ENCODE measurements at regions of chr6 and their contacts with region 1.

Region 1: GRCh38 chr6:37169496-37170272 is at the start of gene PIM1:
- DNase-seq: peak; percentile 99
- ATAC-seq: peak; percentile 90
- H3K4me3 Mint-ChIP-seq: peak within 1 kb of the TSS; percentile 92
- H3K27ac Mint-ChIP-seq: peak within 1 kb of the TSS; percentile 99
- H3K4me1 Mint-ChIP-seq: peaks cover 51% of the 10 kb centered on the region
- H3K27me3 Mint-ChIP-seq: no peaks in the 10 kb centered on the region
- CTCF ChIP-seq: no peak
- total RNA-seq, gene PIM1: 64.7 to 81.2 TPM (median 78.1 TPM) in 3 replicates

Region 2: DNA sequence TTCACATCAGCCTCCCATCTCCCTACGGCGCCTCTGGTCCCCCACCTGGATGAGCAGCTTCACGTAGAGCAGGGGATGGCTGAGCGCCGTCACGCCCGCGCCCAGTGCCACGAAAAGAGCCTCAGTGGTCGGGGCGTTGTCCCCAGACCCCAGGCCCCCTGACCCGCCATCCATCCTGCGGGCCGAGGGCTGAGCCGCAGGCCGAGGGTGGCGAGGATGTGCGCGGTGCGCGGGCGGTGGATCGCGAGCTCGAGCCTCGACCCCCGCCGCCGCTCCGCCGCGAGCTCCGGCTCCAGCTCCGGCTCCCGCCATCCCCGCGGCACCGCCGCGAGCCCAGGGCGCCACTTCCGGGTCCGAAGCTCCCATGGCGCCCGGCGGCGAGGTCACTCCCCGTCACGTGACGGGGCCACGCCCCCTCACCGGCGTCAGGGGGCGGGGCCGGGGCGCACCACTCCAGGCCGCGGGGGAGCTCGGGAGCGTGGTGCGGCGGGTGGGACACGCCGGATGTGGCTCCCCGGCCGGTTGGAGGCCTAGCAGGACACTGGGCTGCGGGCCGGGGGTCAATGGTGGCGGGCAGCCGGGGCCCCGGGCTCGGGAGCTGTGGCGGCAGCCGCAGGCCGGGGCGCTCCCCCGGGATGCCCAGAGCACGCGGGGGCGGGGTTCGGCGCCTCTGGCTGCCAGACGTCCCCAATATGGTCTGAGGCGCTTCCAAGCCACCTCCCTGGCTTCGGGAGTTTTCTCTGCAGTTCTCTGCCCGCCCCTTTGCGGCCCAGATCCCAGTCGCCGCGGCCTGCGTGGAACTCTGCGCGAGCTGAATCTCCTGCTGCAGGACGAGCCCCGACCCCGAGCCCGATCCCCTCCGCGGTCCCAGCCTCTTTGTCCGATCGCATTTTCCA is 183.6 kb before region 1 on chr6 and contains the start of gene MTCH1:
- CTCF ChIA-PET with region 1: no interaction called
- POLR2A ChIA-PET with region 1: interaction called, 10 read pairs
- DNase-seq: peak; percentile 80
- ATAC-seq: peak; percentile 78
- H3K4me3 Mint-ChIP-seq: peak within 1 kb of the TSS; percentile 98
- H3K27ac Mint-ChIP-seq: peak within 1 kb of the TSS; percentile 95
- H3K4me1 Mint-ChIP-seq: peaks cover 20% of the 10 kb centered on the region
- H3K27me3 Mint-ChIP-seq: no peaks in the 10 kb centered on the region
- CTCF ChIP-seq: no peak
- total RNA-seq, gene MTCH1: 198 to 207 TPM (median 204 TPM) in 3 replicates

Region 3: DNA sequence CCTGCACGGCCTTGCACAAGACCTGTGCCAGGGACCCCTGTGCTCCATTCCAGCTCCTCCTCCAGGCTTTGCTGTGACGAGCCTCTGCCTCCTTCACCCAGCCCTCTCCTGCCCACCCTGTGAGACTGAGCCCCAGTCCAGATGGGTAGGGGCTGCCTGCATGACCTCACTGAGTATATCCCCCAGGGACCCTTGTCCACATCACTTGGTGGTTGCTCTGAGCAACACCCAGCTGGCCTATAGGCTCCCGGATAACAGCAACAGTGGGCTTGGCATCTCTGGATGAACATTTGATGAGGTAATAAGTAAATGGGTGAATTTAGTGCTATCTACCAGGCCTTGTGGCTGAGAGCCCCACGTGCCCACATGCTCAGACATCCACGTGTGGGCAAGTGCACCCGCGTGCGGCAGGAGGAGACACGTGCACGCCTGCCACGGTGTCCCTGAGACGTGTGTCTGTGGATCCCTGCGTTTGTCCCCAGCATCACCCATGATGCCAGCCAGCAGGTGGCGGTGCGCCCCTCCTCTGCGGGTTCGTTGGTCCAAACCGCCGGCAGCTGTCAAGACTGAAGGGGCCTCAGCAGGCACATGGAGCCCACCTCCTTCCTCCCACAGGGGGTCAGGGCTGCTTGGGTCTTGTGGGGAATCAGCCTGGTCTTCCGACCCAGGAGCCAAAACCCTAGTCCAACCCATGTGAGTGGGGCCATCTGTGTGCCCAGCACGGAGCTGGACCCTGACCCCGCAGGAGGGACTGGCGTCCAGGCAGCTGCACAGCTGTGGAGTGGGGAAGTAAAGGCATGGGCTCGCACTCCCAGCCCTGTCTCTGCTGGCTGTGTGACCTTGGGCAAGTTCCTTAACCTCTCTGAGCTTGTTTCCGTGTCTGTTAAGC is 118.3 kb before region 1 on chr6:
- CTCF ChIA-PET with region 1: interaction called, 70 read pairs
- POLR2A ChIA-PET with region 1: interaction called, 5 read pairs
- DNase-seq: peak; percentile 94
- ATAC-seq: peak; percentile 38
- H3K4me3 Mint-ChIP-seq: peak overlapping the region; percentile 25
- H3K27ac Mint-ChIP-seq: peak overlapping the region; percentile 82
- H3K4me1 Mint-ChIP-seq: peaks cover 37% of the 10 kb centered on the region
- H3K27me3 Mint-ChIP-seq: no peaks in the 10 kb centered on the region
- CTCF ChIP-seq: peak; percentile 71

Region 4: GRCh38 chr6:37072526-37072925 is 97.2 kb before region 1 on chr6:
- CTCF ChIA-PET with region 1: interaction called, 11 read pairs
- POLR2A ChIA-PET with region 1: interaction called, 5 read pairs
- DNase-seq: no peak
- ATAC-seq: peak; percentile 9
- H3K4me3 Mint-ChIP-seq: no peak overlapping the region
- H3K27ac Mint-ChIP-seq: peak overlapping the region; percentile 93
- H3K4me1 Mint-ChIP-seq: peaks cover 47% of the 10 kb centered on the region
- H3K27me3 Mint-ChIP-seq: no peaks in the 10 kb centered on the region
- CTCF ChIP-seq: no peak

Region 5: GRCh38 chr6:37125783-37126492 is 43.7 kb before region 1 on chr6:
- CTCF ChIA-PET with region 1: interaction called, 29 read pairs
- POLR2A ChIA-PET with region 1: interaction called, 53 read pairs
- DNase-seq: peak; percentile 80
- ATAC-seq: peak; percentile 77
- H3K4me3 Mint-ChIP-seq: peak overlapping the region; percentile 73
- H3K27ac Mint-ChIP-seq: peak overlapping the region; percentile 100
- H3K4me1 Mint-ChIP-seq: peaks cover 85% of the 10 kb centered on the region
- H3K27me3 Mint-ChIP-seq: no peaks in the 10 kb centered on the region
- CTCF ChIP-seq: no peak

Region 6: GRCh38 chr6:37137201-37138090 is 32.2 kb before region 1 on chr6:
- CTCF ChIA-PET with region 1: interaction called, 13 read pairs
- POLR2A ChIA-PET with region 1: interaction called, 183 read pairs
- DNase-seq: peak; percentile 81
- ATAC-seq: peak; percentile 65
- H3K4me3 Mint-ChIP-seq: peak overlapping the region; percentile 98
- H3K27ac Mint-ChIP-seq: peak overlapping the region; percentile 100
- H3K4me1 Mint-ChIP-seq: peaks cover 75% of the 10 kb centered on the region
- H3K27me3 Mint-ChIP-seq: no peaks in the 10 kb centered on the region
- CTCF ChIP-seq: no peak

Measured in WTC11 (cell line).